ENCODE measurements at regions of chr15 and their contacts with region 1.

Region 1: DNA sequence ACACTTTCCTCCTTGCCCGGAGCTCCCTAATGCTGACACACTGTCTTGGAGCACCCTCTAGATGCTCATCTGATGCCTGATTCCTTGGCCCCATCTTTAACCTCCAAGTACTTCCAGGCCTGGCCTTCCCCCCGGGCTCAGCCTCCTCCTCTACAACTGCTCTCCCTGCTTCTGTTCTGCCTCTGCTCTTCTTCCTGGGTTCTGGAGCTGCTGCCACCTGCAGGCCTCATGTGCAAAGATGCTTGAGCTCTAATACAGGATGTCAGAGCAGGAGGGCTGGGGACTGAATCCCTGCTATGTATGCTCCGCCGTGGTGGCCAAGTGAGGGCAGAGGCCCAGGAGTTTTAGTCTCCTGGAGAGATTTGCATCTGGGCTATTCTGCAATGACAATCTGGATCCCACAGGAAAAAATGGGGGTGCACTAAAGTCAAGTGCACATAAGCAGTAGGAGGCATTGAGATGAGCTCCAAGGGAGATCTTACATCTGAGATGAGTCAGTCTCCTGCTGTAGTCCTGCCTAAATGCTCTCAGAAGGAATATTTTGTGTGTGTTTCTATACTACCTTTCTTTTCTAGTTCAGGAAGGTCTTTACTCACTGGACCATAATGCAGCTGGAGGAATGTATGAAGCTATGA is 296.3 kb downstream of the UACA start:
- DNase-seq: peak; percentile 37
- ATAC-seq: peak; percentile 98
- H3K4me3 ChIP-seq: no peak overlapping the region
- H3K27ac ChIP-seq: no peak overlapping the region
- H3K4me1 ChIP-seq: no peaks in the 10 kb centered on the region
- H3K27me3 ChIP-seq: peaks cover 5% of the 10 kb centered on the region; the same call in 1 of the 2 replicates
- CTCF ChIP-seq: peak; percentile 62 to 81 (median 75)
- POLR2A ChIP-seq: no peak
- RAD21 ChIP-seq: peak; percentile 66; the same call in 1 of the 2 replicates

Region 2: GRCh38 chr15:69576035-69576526 is 890.9 kb before region 1 on chr15:
- CTCF ChIA-PET with region 1: interaction called, 3 read pairs
- POLR2A ChIA-PET with region 1: no interaction called
- RAD21 ChIA-PET with region 1: no interaction called
- intact Hi-C with region 1: loop called (anchors 5 kb)
- DNase-seq: peak; percentile 15
- ATAC-seq: peak; percentile 94
- H3K4me3 ChIP-seq: no peak overlapping the region
- H3K27ac ChIP-seq: no peak overlapping the region
- H3K4me1 ChIP-seq: no peaks in the 10 kb centered on the region
- H3K27me3 ChIP-seq: peaks cover 5% of the 10 kb centered on the region; the same call in 1 of the 2 replicates
- CTCF ChIP-seq: peak; percentile 62 to 89 (median 83); a peak in 5 of 6 replicates
- POLR2A ChIP-seq: no peak
- RAD21 ChIP-seq: peak; percentile 82

Region 3: DNA sequence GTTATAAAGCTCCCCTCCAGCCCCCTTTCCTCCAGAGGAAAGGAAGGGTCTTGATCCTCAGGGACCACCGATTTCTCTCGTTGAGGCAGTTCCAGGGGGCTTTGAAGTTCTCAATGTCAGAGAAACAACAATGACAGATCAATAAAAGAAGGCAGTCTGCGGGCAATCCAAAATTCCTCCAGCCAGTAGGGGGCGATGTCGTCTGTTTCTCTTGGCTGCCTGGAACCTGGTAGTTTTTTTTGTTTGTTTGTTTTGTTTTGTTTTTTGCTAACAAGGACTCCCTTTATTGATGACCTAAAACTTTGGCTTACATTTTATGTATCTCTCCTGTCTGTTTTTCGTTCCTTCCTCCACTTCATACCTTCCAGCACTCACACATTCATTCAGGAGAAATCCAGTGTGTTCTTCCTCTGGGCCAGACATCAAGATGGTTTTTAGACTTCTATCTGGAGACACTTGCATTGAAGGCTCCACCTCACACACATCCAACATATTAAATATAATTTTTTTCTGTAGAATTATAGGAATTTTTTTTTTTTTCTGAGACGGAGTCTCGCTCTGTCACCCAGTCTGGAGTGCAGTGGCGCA is 737.8 kb before region 1 on chr15:
- CTCF ChIA-PET with region 1: no interaction called
- POLR2A ChIA-PET with region 1: no interaction called
- RAD21 ChIA-PET with region 1: no interaction called
- intact Hi-C with region 1: loop called (anchors 2 kb)
- DNase-seq: peak; percentile 18
- ATAC-seq: peak; percentile 59
- H3K4me3 ChIP-seq: no peak overlapping the region
- H3K27ac ChIP-seq: no peak overlapping the region
- H3K4me1 ChIP-seq: no peaks in the 10 kb centered on the region
- H3K27me3 ChIP-seq: peaks cover 11% of the 10 kb centered on the region
- CTCF ChIP-seq: peak; percentile 42 to 94 (median 83); a peak in 5 of 6 replicates
- POLR2A ChIP-seq: no peak
- RAD21 ChIP-seq: peak; percentile 69

Region 4: DNA sequence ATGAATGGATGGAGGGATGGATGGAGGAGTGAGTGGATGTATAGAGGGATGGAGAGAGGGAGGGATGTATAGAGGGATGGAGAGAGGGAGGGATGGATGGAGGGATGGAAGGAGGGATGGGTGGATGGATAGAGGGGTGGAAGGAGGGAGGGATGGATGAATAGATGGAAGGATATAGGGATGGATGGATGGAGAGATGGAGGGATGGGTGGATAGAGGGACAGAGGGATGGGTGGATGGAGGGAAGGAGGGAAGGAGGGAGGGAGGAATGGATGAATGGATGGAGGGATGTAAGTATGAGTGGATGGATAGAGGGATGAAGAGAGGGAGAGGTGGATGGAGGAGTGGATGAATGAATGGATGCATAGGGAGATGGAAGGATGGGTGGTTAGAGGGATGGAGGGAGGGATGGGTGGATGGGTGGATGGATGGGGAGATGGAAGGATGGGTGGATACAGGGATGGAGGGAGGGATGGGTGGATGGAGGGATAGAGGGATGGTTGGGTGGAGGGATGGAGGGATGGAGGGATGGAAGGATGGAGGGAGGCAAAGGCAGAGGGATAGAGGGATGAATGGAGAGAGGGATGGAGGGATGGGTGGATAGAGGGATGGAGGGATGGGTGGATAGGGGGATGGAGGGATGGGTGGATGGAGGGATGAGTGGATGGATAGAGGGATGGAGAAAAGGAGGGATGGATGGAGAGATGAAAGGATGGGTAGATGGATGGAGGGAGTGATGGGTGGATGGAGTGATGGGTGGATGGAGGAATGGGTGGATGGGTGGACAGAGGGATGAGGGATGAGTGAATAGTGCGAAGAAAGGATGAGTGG is 17.5 kb before region 1 on chr15:
- CTCF ChIA-PET with region 1: no interaction called
- POLR2A ChIA-PET with region 1: no interaction called
- RAD21 ChIA-PET with region 1: no interaction called
- intact Hi-C with region 1: no loop called
- DNase-seq: no peak
- ATAC-seq: no peak
- H3K4me3 ChIP-seq: no peak overlapping the region
- H3K27ac ChIP-seq: no peak overlapping the region
- H3K4me1 ChIP-seq: no peaks in the 10 kb centered on the region
- H3K27me3 ChIP-seq: no peaks in the 10 kb centered on the region; the same call in 1 of the 2 replicates
- CTCF ChIP-seq: no peak
- POLR2A ChIP-seq: no peak
- RAD21 ChIP-seq: no peak

Region 5: GRCh38 chr15:70488002-70488605 is 21.1 kb after region 1 on chr15:
- CTCF ChIA-PET with region 1: interaction called, 10 read pairs
- POLR2A ChIA-PET with region 1: no interaction called
- RAD21 ChIA-PET with region 1: no interaction called
- intact Hi-C with region 1: no loop called
- DNase-seq: no peak
- ATAC-seq: peak; percentile 71
- H3K4me3 ChIP-seq: no peak overlapping the region
- H3K27ac ChIP-seq: no peak overlapping the region
- H3K4me1 ChIP-seq: peaks cover 14 to 18% of the 10 kb centered on the region in 2 experiments
- H3K27me3 ChIP-seq: peaks cover 4% of the 10 kb centered on the region; the same call in 1 of the 2 replicates
- CTCF ChIP-seq: peak in 2 of 3 experiments; percentile 95 to 97; a peak in 4 of 6 replicates
- POLR2A ChIP-seq: no peak
- RAD21 ChIP-seq: no peak

Region 6: DNA sequence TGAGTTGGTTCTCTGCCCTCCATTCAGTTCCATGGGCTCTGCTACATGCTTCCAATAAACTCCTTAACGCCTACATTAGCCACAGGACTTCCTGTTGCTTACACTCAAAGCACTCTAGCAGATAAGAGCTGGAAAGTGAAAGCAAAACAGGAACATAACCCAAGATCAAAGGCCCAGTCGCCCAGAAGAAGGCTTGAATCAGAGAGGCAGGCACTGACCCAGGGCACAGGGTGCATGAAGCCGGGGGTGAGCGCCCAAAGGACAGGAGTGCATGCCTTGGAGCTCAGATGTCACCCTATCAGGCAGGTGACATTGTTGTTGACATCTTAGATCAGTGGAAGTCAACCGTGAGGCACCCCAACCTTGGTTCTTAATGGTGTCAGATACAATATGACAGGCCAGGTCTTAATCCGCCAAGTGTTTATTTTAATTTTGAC is 61.3 kb after region 1 on chr15:
- CTCF ChIA-PET with region 1: no interaction called
- POLR2A ChIA-PET with region 1: no interaction called
- RAD21 ChIA-PET with region 1: no interaction called
- intact Hi-C with region 1: no loop called
- DNase-seq: peak; percentile 40
- ATAC-seq: peak; percentile 69
- H3K4me3 ChIP-seq: no peak overlapping the region
- H3K27ac ChIP-seq: no peak overlapping the region
- H3K4me1 ChIP-seq: peaks cover 33 to 36% of the 10 kb centered on the region in 2 experiments
- H3K27me3 ChIP-seq: peaks cover 49% of the 10 kb centered on the region; the same call in 1 of the 2 replicates
- CTCF ChIP-seq: no peak
- POLR2A ChIP-seq: no peak
- RAD21 ChIP-seq: no peak